ENCODE measurements at regions of chr3 and their contacts with region 1.

Region 1: GRCh38 chr3:9396700-9397521 is 504 bp upstream of the SETD5 start:
- H3K4me3 Mint-ChIP-seq: peak overlapping the region; percentile 93
- H3K27ac Mint-ChIP-seq: peak overlapping the region; percentile 93
- H3K4me1 Mint-ChIP-seq: peaks cover 58% of the 10 kb centered on the region
- H3K27me3 Mint-ChIP-seq: no peaks in the 10 kb centered on the region

Region 2: GRCh38 chr3:9362731-9363530 is 34.0 kb before region 1 on chr3 and contains the start of gene THUMPD3:
- intact Hi-C with region 1: loop called (anchors 2 kb)
- H3K4me3 Mint-ChIP-seq: peak within 1 kb of the TSS; percentile 97
- H3K27ac Mint-ChIP-seq: peak within 1 kb of the TSS; percentile 99
- H3K4me1 Mint-ChIP-seq: peaks cover 6% of the 10 kb centered on the region
- H3K27me3 Mint-ChIP-seq: peaks cover 5% of the 10 kb centered on the region

Region 3: DNA sequence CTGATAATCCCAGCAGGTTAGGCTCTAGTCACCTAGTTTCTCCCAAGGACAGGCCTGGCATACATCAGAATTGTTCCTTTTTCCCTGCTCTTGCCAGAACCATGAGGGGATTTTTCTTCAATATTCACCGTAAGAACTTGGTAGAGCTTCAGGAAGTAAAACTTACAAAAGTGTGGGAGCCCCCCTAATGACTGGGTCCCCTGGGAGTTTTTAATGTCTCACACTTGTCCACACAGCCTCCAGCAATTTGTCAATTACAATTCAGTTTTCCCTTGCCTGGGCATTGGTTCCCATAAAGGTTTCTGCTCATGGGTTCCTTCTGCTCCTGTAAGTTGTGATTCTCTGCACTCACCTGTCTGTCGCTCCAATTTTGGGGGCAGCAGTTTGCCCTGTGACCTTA is 128.2 kb after region 1 on chr3:
- intact Hi-C with region 1: no loop called
- H3K4me3 Mint-ChIP-seq: no peak overlapping the region
- H3K27ac Mint-ChIP-seq: no peak overlapping the region
- H3K4me1 Mint-ChIP-seq: no peaks in the 10 kb centered on the region
- H3K27me3 Mint-ChIP-seq: peaks cover 31% of the 10 kb centered on the region

Region 4: DNA sequence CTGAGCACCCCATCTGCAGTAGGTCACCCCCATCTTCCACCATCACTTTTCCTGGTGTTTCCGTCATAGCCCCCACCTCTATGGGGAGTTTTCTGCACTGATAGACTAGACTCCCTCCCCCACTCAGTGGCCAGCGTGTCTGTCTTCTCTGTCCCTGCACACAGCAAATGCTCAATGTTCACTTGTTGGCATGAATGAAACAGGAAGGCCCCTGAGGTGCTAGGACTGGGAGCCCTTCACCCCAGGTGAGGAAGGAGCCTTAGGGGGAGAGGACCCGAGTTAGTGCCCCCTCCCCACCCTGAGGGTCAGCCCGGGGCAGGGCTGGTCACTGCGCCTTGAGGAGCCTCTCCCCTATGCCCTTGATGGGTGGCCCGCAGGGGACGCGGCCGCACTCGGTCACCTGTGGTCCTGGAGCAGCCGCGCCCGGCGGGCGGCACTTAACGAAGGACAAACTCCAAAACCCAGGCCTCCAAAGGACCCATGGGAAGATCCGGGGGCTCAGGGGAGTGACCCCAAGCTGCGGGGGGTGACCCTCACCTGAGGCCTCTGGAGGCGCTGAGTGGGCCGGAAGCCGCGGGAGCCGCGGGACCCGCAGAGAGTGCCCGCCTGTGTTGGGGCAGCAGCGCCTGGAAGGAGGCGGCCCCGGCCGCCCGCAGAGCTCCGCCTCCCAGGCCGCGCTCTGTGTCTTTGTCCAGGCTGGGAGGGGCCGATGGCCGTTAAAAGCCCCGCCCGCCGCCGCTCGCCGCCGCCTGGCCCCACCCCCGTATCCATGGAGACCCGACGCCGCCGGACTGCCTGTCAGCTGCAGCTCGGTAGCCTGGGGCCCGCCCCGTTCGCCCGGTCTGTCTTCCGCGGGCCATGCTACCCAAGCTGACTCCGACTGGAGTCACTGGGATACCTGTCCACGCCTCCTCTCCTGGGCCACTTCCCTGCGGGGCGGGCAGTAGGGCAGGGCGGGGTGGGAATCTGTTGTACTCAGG is 613.9 kb after region 1 on chr3:
- intact Hi-C with region 1: loop called (anchors 5 kb)
- H3K4me3 Mint-ChIP-seq: peak overlapping the region; percentile 73
- H3K27ac Mint-ChIP-seq: peak overlapping the region; percentile 49
- H3K4me1 Mint-ChIP-seq: peaks cover 54% of the 10 kb centered on the region
- H3K27me3 Mint-ChIP-seq: peaks cover 3% of the 10 kb centered on the region

Measured in dendritic cell treated with granulocyte-macrophage colony-stimulating factor and Interleukin-4, amounts not matched to agents 40 ng/mL and 50 ng/mL, for 4 days (primary cell).